ENCODE measurements at regions of chr2 and their contacts with region 1.

Region 1: DNA sequence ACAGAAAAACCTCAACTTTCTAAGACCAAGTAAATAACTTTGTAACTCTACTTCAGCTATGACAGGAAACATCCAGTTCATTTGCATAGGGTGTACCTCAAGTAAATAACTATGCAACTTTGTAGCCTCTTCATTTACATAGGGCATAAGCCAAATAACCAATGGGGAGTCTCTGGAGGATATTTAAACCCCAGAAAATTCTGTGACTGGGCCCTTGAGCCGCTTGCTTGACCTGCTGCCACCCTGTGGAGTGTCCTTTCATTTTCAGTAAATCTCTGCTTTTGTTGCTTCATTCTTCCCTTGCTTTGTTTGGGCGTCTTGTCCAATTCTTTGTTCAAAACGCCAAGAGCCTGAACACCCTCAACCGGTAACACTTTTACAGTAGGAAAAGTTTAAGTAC is 1112.7 kb upstream of the NRXN1 start:
- DNase-seq: peak; percentile 1
- ATAC-seq: peak; percentile 49
- H3K4me3 ChIP-seq: no peak overlapping the region
- H3K27ac ChIP-seq: no peak overlapping the region
- H3K4me1 ChIP-seq: no peaks in the 10 kb centered on the region
- H3K27me3 ChIP-seq: no peaks in the 10 kb centered on the region
- CTCF ChIP-seq: no peak
- POLR2A ChIP-seq: no peak
- RAD21 ChIP-seq: peak; percentile 23; the same call in 1 of the 2 replicates

Region 2: DNA sequence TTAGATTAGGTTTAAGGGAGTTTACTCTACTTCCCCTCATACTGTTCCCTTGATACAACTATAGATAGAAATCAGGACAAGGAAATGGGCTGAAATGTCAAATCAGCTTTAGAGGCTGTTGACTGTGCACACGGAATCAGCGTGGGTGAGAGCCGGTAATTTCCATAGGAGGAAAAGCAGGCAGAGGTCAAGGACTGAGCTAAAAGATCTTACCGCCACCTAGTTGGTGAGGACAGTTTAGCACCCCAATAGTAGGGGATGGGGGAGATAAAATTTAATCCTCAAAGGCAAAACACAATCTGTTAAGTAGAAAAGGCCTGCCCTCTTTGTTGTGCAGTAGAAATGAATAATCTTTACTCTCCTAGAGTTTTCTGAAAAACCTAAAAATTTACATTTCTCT is 468.5 kb after region 1 on chr2:
- CTCF ChIA-PET with region 1: no interaction called
- POLR2A ChIA-PET with region 1: no interaction called
- dilution Hi-C with region 1: no loop called
- in situ Hi-C with region 1: no loop called
- intact Hi-C with region 1: loop called (anchors 10 kb)
- DNase-seq: no peak
- ATAC-seq: no peak
- H3K4me3 ChIP-seq: no peak overlapping the region
- H3K27ac ChIP-seq: no peak overlapping the region
- H3K4me1 ChIP-seq: no peaks in the 10 kb centered on the region
- H3K27me3 ChIP-seq: no peaks in the 10 kb centered on the region
- CTCF ChIP-seq: no peak
- POLR2A ChIP-seq: no peak
- RAD21 ChIP-seq: no peak